ENCODE measurements at regions of chr9 and their contacts with region 1.

Region 1: GRCh38 chr9:92299116-92299515 is 5.6 kb upstream of the IARS1 start:
- DNase-seq: no peak
- H3K4me3 Mint-ChIP-seq: no peak overlapping the region
- H3K27ac Mint-ChIP-seq: peak overlapping the region; percentile 5
- H3K4me1 Mint-ChIP-seq: peaks cover 39% of the 10 kb centered on the region
- H3K27me3 Mint-ChIP-seq: no peaks in the 10 kb centered on the region

Region 2: DNA sequence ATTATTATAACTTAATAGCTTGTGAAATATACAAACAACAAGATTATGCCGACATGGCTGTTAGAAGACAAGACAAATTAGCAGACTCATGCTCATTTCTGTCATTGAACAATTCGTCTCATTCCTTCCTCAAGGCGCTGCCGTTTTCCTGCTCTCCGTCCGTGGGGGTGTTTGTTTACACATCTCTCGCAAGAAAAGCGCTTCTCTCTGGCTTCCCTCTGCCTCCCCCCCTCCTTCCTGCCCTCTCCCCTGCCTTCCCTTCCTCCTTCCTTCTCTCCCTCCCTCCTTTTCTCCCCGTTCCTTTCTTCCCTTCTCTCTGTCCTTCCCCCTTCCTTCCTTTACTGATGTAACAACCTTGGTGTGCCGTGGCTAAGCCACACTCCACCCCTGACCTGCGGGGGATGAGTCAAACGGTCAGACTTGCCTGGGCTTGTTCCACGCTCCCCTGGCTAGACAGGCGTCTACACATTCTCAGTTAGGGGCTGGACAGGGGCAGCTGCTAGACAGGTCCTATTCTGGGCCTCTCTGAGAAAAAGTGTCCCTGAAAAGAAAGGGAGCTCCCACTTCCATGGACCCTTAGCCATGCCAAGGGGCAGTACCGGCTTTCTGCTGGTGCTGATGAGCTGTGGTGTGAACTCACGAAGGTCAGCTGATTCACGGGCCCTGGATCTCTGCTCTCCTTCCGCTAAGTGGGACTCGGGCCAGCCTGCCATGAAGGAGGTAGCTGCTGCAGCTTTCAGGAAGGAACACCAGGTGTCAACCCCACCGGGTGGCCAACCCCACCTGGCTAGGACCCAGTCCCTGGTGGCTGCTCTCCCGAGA is 151.9 kb before region 1 on chr9:
- CTCF ChIA-PET with region 1: interaction called, 10 read pairs
- POLR2A ChIA-PET with region 1: no interaction called
- DNase-seq: no peak
- H3K4me3 Mint-ChIP-seq: no peak overlapping the region
- H3K27ac Mint-ChIP-seq: peak overlapping the region; percentile 51
- H3K4me1 Mint-ChIP-seq: peaks cover 19% of the 10 kb centered on the region
- H3K27me3 Mint-ChIP-seq: peaks cover 23% of the 10 kb centered on the region

Measured in activated CD4-positive, alpha-beta T cell treated with anti-CD3 and anti-CD28 coated beads, Interleukin-2, amount 10 ng/mL, durations not matched to agents 7 days and 5 days (primary cell).